Head of caudate nucleus (tissue), 42 donors: ENCODE measurements at regions of chr3 and their contacts with region 1.

Region 1: DNA sequence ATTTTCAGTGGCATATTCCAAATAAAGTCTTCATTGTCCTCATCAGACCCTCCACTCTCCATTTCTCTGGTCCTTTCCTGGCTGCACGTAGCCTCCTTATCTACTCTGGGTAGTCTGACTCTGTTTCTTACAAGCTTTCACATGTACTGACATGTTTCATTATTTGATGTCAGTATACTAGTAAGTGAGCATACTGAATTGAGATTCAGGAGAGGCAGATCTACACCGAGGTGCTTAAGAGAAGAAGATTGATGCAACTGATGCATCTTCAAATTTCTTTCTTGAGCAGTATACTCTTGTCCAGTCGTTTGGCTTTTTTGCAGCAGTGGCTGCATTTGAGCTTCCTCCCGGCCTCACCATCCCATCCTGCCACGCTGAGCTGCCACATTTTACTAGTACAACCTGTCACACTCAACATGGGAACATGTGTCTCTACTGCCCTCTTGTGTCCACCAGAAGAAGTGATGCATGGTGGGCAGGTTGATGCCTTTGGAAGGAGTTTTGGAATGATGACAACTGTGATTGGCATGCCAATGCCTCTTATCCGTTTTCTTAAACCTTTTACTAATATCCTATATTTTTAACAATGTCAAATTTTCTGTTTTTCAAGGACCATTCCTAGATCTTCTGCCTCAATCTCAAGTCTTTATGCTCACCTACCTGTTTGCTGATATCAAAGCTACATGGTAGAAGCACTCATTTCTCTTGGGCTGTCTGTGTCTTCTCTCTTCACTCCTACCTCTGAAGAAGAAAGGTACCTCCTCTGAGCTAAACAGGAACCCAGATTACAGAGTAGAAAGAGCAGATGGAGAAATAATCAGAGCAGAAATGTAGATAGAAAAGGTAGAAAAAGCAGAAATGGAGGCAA is 38.7 kb downstream of the GUCA1C start:
- DNase-seq: peak; percentile 8 to 83 (median 57)

Region 2: GRCh38 chr3:108489771-108490170 is 425.2 kb before region 1 on chr3:
- intact Hi-C with region 1: loop called (anchors 10 kb)
- DNase-seq: peak in 25 of 42 donors; percentile 19 to 85 (median 51)

Region 3: DNA sequence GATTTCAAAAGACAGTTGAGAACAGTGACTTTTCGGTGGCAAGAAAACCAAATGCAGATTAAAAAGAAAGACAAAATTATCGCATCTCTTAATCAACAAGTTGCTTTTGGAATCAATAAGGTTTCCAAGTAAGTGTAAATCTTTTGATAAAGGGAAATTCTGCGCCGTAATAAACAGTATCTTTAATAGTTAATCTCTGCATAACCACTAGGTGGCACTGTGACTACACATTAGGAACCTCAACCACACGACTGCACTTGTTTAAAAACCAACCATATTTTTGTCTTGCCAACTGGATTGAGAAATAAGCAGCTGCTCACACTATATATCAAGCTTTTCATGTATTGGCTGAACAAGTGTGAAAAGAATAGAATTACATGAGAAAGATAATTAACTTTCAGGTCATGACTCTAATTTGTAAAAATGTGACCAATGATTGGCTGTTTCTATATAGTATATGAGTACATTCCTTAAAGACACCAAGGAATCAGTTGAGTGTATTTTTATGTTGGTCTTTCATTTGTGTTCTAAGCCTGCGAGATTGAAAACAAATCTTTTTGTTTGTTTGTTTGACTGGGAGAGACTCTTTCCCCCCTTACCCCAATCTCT is 252.8 kb before region 1 on chr3:
- intact Hi-C with region 1: loop called (anchors 5 kb)
- DNase-seq: peak in 17 of 42 donors; percentile 5 to 67 (median 26)